Kidney (tissue), 22 donors: ENCODE measurements at regions of chr15 and their contacts with region 1.

Region 1: DNA sequence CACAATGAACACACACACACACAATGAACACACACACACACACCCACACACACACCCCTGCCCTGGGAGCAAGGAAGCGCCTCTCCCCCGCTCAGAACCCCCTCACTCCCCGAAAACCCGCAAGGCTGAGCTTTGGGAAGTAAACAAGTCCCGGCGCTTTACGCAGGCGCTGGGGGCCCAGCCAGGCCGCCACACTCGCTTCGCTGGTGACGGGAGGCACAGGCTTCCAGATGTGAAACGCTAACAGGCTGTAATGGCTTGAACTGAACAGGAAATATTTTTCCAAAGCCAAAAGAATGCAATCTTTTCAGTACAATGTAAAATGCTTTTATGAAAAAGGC is 122.7 kb upstream of the IGF1R start:
- DNase-seq: peak in 4 of 5 donors; percentile 62 to 91 (median 69)
- H3K4me3 ChIP-seq: peak overlapping the region in 1 of 3 donors; percentile 20
- H3K27ac ChIP-seq: no peak overlapping the region
- H3K4me1 ChIP-seq: no peaks in the 10 kb centered on the region
- H3K27me3 ChIP-seq: no peaks in the 10 kb centered on the region
- CTCF ChIP-seq: no peak

Region 2: DNA sequence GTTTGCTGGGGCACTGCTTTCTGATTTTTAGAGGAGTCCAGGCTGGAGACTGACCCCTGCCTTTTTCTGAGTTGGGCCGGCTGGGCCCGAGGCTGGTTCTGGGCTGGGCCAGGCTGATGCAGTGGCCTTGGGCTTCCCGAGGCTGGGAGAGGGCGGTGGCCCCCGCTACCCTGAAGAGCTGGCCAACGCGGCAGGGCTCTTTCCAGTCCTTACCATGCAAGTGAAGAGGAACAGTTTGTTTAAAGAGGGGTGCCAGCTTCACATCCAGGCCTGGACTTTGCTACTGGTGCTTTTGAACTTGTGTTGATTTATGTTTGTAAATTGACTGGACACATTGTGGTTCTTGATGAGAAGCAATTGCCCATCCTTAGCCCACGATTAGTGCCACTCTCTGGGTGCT is 138.0 kb after region 1 on chr15:
- intact Hi-C with region 1: loop called (anchors 5 kb)
- DNase-seq: no peak
- H3K4me3 ChIP-seq: no peak overlapping the region
- H3K27ac ChIP-seq: no peak overlapping the region
- H3K4me1 ChIP-seq: peaks cover 0 to 20% (median 16%) of the 10 kb centered on the region in 3 donors
- H3K27me3 ChIP-seq: no peaks in the 10 kb centered on the region
- CTCF ChIP-seq: no peak

Region 3: DNA sequence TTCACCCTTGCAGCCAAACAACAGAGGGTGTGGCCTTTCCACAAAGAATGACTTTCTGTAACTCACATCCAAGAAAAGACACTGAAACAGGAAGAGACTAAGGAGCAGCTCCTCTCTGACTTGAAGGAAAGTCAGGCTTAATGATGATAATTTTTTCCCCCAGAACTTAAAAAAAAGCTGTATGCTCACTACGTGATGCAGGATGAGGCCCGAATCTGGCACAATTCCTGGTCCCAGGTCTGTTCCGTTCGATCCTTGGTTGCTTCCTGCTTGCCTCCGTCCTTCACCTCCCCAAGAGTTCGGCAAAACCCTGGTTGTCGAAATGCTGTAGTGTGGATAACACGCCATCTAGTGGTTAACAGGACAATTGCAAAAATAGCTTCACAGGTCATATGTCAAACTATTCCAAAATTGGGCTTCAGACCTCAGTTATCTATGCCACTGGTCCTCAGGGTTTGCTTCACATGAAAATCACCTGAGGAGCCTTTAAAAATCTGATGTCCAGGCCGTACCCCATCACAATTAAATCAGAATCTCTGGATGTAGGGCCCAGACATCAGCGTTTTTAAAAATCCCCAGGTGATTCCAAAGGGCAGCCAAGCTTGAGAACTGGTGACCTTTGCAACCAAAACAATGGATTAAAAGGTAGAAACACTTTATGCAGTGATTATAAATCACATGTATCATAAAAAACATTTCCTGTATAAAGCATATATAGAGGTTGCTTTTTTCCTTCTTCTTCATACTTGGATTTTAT is 551.1 kb after region 1 on chr15:
- intact Hi-C with region 1: loop called (anchors 10 kb)
- DNase-seq: peak in 4 of 5 donors; percentile 68 to 90 (median 78)
- H3K4me3 ChIP-seq: peak overlapping the region; percentile 44 to 72 (median 68)
- H3K27ac ChIP-seq: no peak overlapping the region
- H3K4me1 ChIP-seq: no peaks in the 10 kb centered on the region
- H3K27me3 ChIP-seq: no peaks in the 10 kb centered on the region
- CTCF ChIP-seq: peak; percentile 82